Activated CD8-positive, alpha-beta T cell treated with anti-CD3 and anti-CD28 coated beads for 36 hours (primary cell): ENCODE measurements at regions of chr6 and their contacts with region 1.

Region 1: DNA sequence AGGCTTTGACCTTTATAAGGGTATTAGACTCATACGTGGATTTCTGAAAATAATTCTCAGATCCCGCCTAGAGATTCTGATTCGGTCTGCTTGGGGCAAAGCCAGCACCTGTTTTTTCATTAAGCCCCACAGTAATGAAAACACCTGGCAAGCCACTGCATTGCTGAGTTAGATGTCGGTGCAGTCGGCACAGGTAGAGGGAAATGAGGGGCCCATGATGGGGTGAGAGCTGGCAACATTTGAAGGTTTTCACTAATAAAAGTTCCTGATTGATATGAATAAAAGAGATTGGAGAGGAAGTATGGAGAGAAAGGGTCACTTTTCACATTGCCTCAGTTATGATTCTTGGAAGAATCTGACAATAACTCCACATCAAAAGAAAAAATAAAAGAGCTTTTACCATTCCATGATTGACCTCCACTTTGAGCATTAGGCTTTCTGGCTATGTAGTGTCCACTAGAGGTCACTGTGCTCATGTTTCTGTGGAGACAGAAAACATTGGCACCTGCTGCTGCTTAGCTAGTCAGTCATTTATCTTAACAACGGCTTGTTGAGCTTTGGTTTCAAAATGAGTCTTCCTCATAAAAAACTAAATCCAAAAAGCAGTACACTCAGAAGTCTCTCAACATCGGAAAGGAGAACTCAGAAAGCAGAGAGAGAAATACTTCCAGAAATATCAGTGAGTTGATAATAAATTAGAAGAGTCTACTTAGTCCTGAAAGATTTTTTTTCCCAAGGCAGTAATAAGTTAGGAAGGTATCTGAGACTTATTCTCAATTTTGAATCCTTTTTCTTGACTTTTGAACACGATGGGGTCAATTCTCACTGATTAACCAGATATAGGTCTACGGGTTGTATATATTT is 53.3 kb upstream of the KLHL31 start:
- DNase-seq: peak; percentile 52
- ATAC-seq: peak; percentile 89
- H3K4me3 Mint-ChIP-seq: no peak overlapping the region
- H3K27ac Mint-ChIP-seq: no peak overlapping the region
- H3K4me1 Mint-ChIP-seq: peaks cover 4% of the 10 kb centered on the region
- H3K27me3 Mint-ChIP-seq: peaks cover 8% of the 10 kb centered on the region
- CTCF ChIP-seq: peak; percentile 65

Region 2: GRCh38 chr6:53492860-53493634 is 225.8 kb before region 1 on chr6:
- CTCF ChIA-PET with region 1: interaction called, 224 read pairs
- POLR2A ChIA-PET with region 1: no interaction called
- intact Hi-C with region 1: no loop called
- DNase-seq: peak; percentile 44
- ATAC-seq: peak; percentile 89
- H3K4me3 Mint-ChIP-seq: no peak overlapping the region
- H3K27ac Mint-ChIP-seq: peak overlapping the region; percentile 32
- H3K4me1 Mint-ChIP-seq: peaks cover 6% of the 10 kb centered on the region
- H3K27me3 Mint-ChIP-seq: peaks cover 13% of the 10 kb centered on the region
- CTCF ChIP-seq: peak; percentile 77

Region 3: GRCh38 chr6:53651764-53652401 is 66.9 kb before region 1 on chr6:
- CTCF ChIA-PET with region 1: interaction called, 10 read pairs
- POLR2A ChIA-PET with region 1: no interaction called
- intact Hi-C with region 1: no loop called
- DNase-seq: peak; percentile 84
- ATAC-seq: peak; percentile 92
- H3K4me3 Mint-ChIP-seq: peak overlapping the region; percentile 83
- H3K27ac Mint-ChIP-seq: peak overlapping the region; percentile 88
- H3K4me1 Mint-ChIP-seq: peaks cover 31% of the 10 kb centered on the region
- H3K27me3 Mint-ChIP-seq: no peaks in the 10 kb centered on the region
- CTCF ChIP-seq: no peak

Region 4: GRCh38 chr6:53703047-53703446 is 15.8 kb before region 1 on chr6:
- CTCF ChIA-PET with region 1: interaction called, 27 read pairs
- POLR2A ChIA-PET with region 1: no interaction called
- intact Hi-C with region 1: no loop called
- DNase-seq: no peak
- ATAC-seq: no peak
- H3K4me3 Mint-ChIP-seq: no peak overlapping the region
- H3K27ac Mint-ChIP-seq: no peak overlapping the region
- H3K4me1 Mint-ChIP-seq: peaks cover 10% of the 10 kb centered on the region
- H3K27me3 Mint-ChIP-seq: no peaks in the 10 kb centered on the region
- CTCF ChIP-seq: no peak

Region 5: DNA sequence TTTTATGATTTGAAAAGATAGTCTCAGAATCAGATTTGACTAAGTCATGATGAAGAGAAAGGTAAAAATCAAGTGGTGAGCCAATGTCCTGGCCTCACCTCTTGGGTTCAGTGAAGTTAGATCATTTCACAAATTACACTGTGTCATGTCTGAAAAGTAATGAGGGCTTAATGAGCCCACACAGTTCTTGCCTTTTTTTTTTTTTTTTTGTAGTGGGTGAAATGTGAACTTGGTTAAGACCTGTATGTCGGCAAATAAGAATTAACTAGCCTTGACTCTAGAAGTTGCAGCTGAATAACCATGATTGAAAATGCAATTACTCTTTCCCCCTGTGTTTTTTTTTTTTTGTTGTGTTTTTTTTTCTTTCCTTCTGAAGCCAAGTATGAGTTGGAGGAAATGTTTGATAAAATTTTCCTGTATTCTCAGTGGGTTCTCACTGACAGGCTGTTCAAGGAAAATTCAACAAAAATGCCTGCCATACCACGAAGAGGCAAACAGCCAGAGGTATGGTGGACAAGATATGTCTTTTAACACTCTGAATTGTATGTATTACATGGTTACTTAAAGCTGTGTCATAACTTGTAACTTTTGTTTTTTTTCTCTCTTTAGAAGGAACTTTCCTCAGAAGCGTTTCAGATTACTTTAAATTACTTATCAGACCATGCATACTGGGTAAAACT is 257.2 kb after region 1 on chr6:
- CTCF ChIA-PET with region 1: no interaction called
- POLR2A ChIA-PET with region 1: no interaction called
- intact Hi-C with region 1: no loop called
- DNase-seq: no peak
- ATAC-seq: no peak
- H3K4me3 Mint-ChIP-seq: no peak overlapping the region
- H3K27ac Mint-ChIP-seq: no peak overlapping the region
- H3K4me1 Mint-ChIP-seq: no peaks in the 10 kb centered on the region
- H3K27me3 Mint-ChIP-seq: peaks cover 1% of the 10 kb centered on the region
- CTCF ChIP-seq: no peak